ENCODE measurements at regions of chr2 and their contacts with region 1.

Region 1: GRCh38 chr2:112896909-112897623 is 13.9 kb upstream of the IL37 start:
- DNase-seq: no peak
- H3K4me3 ChIP-seq: no peak overlapping the region
- CTCF ChIP-seq: no peak
- POLR2A ChIP-seq: no peak

Region 2: GRCh38 chr2:112821682-112822081 is 75.4 kb before region 1 on chr2:
- intact Hi-C with region 1: loop called (anchors 2 kb)
- DNase-seq: no peak
- H3K4me3 ChIP-seq: no peak overlapping the region
- CTCF ChIP-seq: no peak
- POLR2A ChIP-seq: no peak

Measured in lower leg skin (tissue), 4 donors.